Heart left ventricle (tissue), 16 donors: ENCODE measurements at regions of chr2 and their contacts with region 1.

Region 1: DNA sequence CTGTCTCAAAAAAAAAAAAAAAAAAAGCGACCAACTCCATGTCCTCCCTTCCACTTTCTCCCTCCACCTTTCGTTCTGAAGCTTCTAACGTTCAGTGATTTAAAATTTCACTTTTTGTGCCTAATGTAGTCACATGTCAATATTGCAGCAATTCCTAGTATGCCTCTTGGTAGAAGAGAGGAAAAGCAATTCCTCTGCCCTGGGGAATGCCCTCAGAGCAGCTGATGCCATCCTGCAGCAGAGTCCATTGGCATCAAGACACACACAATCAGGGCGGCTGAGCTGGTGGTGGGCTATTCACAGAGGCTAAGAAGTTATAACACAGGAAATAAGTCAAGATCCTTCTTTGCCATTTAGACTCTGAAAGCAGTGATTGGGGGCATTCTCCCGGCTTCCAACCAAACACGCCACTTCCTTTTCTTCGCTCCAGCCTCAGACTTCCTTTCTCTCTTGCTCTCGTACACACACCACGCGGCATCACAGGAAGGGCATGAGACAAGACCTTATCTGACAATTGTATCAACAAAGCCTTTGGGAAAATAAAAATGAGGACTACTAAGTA is 71.9 kb downstream of the MOGAT1 start:
- DNase-seq: peak in 1 of 5 donors; percentile 20
- ATAC-seq: peak in 3 of 4 donors; percentile 29 to 70 (median 48)
- H3K4me3 ChIP-seq: no peak overlapping the region
- H3K27ac ChIP-seq: peak overlapping the region in 6 of 12 donors; percentile 3 to 79 (median 17)
- H3K4me1 ChIP-seq: peaks cover 0 to 44% (median 12%) of the 10 kb centered on the region in 12 donors
- H3K27me3 ChIP-seq: no peaks in the 10 kb centered on the region
- CTCF ChIP-seq: no peak
- POLR2A ChIP-seq: no peak

Region 2: GRCh38 chr2:222514936-222515335 is 228.4 kb before region 1 on chr2:
- intact Hi-C with region 1: no loop called
- DNase-seq: no peak
- ATAC-seq: no peak
- H3K4me3 ChIP-seq: no peak overlapping the region
- H3K27ac ChIP-seq: no peak overlapping the region
- H3K4me1 ChIP-seq: peaks cover 0 to 6% (median 0%) of the 10 kb centered on the region in 12 donors
- H3K27me3 ChIP-seq: no peaks in the 10 kb centered on the region
- CTCF ChIP-seq: no peak
- POLR2A ChIP-seq: no peak

Region 3: GRCh38 chr2:222797261-222797660 is 53.9 kb after region 1 on chr2:
- intact Hi-C with region 1: loop called in 1 of 10 experiments (anchors 5 kb)
- DNase-seq: no peak
- ATAC-seq: peak in 1 of 4 donors; percentile 42
- H3K4me3 ChIP-seq: no peak overlapping the region
- H3K27ac ChIP-seq: peak overlapping the region in 5 of 12 donors; percentile 19 to 61 (median 30)
- H3K4me1 ChIP-seq: peaks cover 0 to 37% (median 23%) of the 10 kb centered on the region in 12 donors
- H3K27me3 ChIP-seq: no peaks in the 10 kb centered on the region
- CTCF ChIP-seq: peak in 10 of 12 donors; percentile 28 to 55 (median 46)
- POLR2A ChIP-seq: no peak

Region 4: DNA sequence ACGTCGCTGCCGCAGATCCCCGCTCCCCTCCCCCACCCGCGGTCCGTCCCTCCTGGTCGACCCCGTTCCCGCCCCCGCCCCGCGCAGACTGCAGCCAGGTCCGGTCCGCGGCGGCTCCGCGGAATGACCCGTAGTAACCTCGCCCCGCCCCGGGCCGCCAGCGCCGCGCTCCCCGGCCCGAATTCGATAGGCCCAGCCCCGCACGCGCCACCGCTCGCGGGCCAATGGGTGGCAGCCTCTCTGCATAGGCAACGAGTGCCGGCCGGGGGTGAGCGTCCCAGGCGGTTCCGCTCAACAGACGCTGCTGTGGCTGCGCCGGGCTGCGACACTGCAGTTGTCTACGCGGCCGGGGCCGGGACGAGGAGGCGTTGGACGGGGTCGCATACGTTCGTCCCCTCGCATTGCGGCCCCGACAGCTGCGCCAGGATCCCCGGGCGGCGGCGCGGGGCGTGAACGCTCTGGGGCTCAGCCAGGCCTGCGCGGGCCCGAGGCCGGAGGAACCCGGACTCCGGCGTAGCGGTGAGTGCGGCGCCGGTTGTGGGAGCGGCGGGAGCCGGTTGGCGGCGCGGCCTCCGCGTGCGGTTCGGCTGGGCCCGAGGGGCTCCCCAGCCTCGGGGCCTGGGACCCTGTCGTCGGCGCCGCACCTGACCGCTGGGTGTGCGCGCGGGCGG is 117.5 kb after region 1 on chr2 and contains the start of gene ACSL3:
- intact Hi-C with region 1: no loop called
- DNase-seq: peak; percentile 97 to 99 (median 98)
- ATAC-seq: peak; percentile 89 to 99 (median 96)
- H3K4me3 ChIP-seq: peak within 1 kb of the TSS; percentile 74 to 99 (median 93)
- H3K27ac ChIP-seq: peak within 1 kb of the TSS; percentile 93 to 100 (median 98)
- H3K4me1 ChIP-seq: peaks cover 7 to 54% (median 41%) of the 10 kb centered on the region in 12 donors
- H3K27me3 ChIP-seq: no peaks in the 10 kb centered on the region
- CTCF ChIP-seq: peak in 4 of 12 donors; percentile 20 to 45 (median 27)
- POLR2A ChIP-seq: peak; percentile 93 to 99
- total RNA-seq, gene ACSL3: 44.5 to 56.8 (median 52.4) TPM